ENCODE measurements at regions of chr11 and their contacts with region 1.

Region 1: GRCh38 chr11:15055620-15056356 is 17.6 kb upstream of the CALCB start:
- DNase-seq: no peak
- H3K4me3 ChIP-seq: no peak overlapping the region
- H3K27ac ChIP-seq: no peak overlapping the region
- H3K4me1 ChIP-seq: no peaks in the 10 kb centered on the region
- H3K27me3 ChIP-seq: peaks cover 3% of the 10 kb centered on the region
- CTCF ChIP-seq: no peak
- EP300 ChIP-seq: no peak
- POLR2A ChIP-seq: no peak

Region 2: GRCh38 chr11:15027011-15027410 is 28.8 kb before region 1 on chr11:
- in situ Hi-C with region 1: no loop called
- intact Hi-C with region 1: loop called (anchors 2 kb)
- DNase-seq: no peak
- H3K4me3 ChIP-seq: no peak overlapping the region
- H3K27ac ChIP-seq: no peak overlapping the region
- H3K4me1 ChIP-seq: no peaks in the 10 kb centered on the region
- H3K27me3 ChIP-seq: no peaks in the 10 kb centered on the region
- CTCF ChIP-seq: no peak
- EP300 ChIP-seq: no peak
- POLR2A ChIP-seq: no peak

Region 3: DNA sequence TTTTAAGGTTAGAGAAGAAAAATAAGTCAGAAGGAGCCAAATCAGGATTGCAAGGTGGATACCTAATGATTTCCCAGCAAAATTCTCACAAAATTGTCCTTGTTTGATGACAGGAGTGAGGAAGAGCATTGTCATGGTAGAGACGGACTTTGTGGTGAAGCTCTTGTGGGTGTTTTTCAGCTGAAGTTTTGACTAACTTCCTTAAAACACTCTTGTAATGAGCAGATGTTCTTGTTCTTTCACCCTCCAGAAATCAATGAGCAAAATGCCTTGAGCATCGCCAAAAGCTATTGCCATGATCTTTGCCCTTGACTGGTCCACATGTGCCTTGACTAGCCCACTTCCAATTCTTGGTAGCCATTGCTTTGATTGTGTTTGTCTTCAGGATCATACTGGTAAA is 37.6 kb after region 1 on chr11:
- in situ Hi-C with region 1: no loop called
- intact Hi-C with region 1: no loop called
- DNase-seq: no peak
- H3K4me3 ChIP-seq: no peak overlapping the region
- H3K27ac ChIP-seq: no peak overlapping the region
- H3K4me1 ChIP-seq: no peaks in the 10 kb centered on the region
- H3K27me3 ChIP-seq: no peaks in the 10 kb centered on the region
- CTCF ChIP-seq: no peak
- EP300 ChIP-seq: no peak
- POLR2A ChIP-seq: no peak

Measured in transverse colon (tissue), 4 donors.